ENCODE measurements at regions of chr1 and their contacts with region 1.

Region 1: GRCh38 chr1:21439721-21440629 is at the start of gene NBPF3:
- DNase-seq: peak; percentile 93
- H3K4me3 ChIP-seq: peak within 1 kb of the TSS; percentile 66 to 92 (median 84)
- H3K27ac ChIP-seq: peak within 1 kb of the TSS; percentile 49
- H3K4me1 ChIP-seq: peaks cover 8% of the 10 kb centered on the region
- H3K27me3 ChIP-seq: no peaks in the 10 kb centered on the region
- CTCF ChIP-seq: no peak
- total RNA-seq, gene NBPF3: 12.8 to 14.6 TPM

Region 2: GRCh38 chr1:21620496-21620895 is 180.5 kb after region 1 on chr1:
- CTCF ChIA-PET with region 1: no interaction called
- dilution Hi-C with region 1: loop called (anchors 10 kb)
- in situ Hi-C with region 1: no loop called
- intact Hi-C with region 1: no loop called
- DNase-seq: no peak
- H3K4me3 ChIP-seq: no peak overlapping the region
- H3K27ac ChIP-seq: no peak overlapping the region
- H3K4me1 ChIP-seq: peaks cover 3% of the 10 kb centered on the region
- H3K27me3 ChIP-seq: peaks cover 2% of the 10 kb centered on the region
- CTCF ChIP-seq: no peak

Measured in mammary epithelial cell (primary cell).